Mammary epithelial cell (primary cell): ENCODE measurements at regions of chr21 and their contacts with region 1.

Region 1: GRCh38 chr21:36337099-36337509 is 17.1 kb downstream of the MORC3 start:
- DNase-seq: peak; percentile 85
- H3K4me3 ChIP-seq: peak overlapping the region in 1 of 3 experiments; percentile 34
- H3K27ac ChIP-seq: peak overlapping the region; percentile 99
- H3K4me1 ChIP-seq: peaks cover 13% of the 10 kb centered on the region
- H3K27me3 ChIP-seq: no peaks in the 10 kb centered on the region
- CTCF ChIP-seq: no peak

Region 2: DNA sequence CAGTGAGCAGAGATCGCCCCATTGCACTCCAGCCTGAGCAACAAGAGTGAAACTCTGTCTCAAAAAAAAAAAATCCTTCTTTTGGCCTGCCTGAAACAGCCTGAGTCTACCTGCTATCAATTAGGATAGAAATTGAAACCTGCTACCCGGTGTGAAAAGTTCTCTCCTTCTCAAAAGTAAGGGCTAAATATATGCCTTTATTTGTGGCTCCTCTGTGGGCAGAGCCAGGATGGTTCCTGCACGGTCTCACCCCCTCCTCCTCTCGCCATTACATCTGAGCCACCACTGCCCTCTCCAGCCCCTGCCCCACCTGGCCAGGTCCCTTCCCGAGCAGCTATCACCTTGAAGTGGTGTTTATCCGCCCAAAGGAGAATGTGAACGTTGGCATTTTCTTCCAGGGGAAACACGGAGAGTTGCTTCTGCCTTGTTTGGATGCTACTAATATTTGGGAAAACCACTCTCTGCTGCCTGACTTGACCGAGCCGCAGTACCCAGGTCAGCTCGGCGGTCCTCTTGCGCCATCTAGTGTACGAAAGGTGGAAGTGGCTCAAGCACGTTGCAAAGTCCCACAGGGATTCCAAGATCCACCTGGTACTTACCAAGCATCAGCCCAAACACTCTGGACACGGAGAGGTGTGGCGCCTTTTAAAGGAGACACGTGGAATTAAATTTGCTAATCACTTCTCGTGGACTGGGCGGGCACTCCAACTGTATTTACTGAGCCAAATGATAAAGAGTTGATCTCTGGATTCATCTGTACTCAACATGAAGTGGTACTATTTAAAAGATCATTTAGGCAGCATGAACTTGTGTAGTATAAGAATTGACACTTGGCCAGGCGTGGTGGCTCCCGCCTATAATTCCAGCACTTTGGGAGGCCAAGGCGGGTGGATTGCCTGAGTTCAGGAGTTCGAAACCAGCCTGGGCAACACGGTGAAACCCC is 308.7 kb before region 1 on chr21:
- CTCF ChIA-PET with region 1: no interaction called
- dilution Hi-C with region 1: no loop called
- in situ Hi-C with region 1: no loop called
- intact Hi-C with region 1: no loop called
- DNase-seq: peak; percentile 70
- H3K4me3 ChIP-seq: no peak overlapping the region
- H3K27ac ChIP-seq: no peak overlapping the region
- H3K4me1 ChIP-seq: peaks cover 11% of the 10 kb centered on the region
- H3K27me3 ChIP-seq: no peaks in the 10 kb centered on the region
- CTCF ChIP-seq: peak; percentile 96 to 97

Region 3: DNA sequence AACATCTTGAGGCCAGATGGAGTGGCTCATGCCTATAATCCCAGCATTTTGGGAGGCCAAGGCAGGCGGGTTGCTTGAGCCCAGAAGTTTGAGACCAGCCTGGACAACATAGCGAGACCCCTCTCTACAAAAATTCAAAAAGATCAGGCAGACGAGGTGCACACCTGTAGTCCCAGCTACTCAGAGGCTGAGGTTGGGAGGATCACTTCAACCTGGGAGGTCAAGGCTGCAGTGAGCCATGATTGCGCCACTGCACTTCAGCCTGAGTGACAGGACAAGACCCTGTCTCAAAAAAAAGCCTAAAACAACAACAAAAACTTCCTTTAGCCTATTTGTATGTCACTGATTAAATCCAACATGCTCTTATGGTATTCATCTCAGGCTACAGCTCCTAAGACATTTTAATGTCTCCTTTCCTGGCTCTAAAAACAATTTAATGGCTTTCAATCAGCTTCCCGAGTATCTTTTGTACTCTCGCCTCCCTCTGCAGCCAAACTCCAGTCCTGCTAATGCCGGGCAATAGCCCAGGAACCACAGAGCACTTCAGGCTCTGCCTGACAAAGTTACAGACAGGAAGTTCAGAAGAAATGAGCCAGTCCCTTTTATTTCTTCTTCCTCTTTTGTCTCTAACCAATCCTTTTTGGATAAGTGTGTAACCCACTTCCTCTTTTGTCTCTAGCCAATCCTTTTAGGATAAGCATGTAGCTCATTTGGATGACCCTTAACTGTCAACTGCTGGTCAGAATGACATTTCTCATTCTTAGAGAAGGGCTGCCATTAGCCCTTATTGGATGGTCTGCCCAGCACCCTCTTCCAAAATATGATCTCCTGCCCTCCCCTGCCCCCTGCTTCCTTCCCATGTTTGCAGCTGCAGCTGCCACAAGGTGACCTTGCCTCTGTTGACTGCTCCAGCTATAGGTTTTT is 187.1 kb before region 1 on chr21:
- CTCF ChIA-PET with region 1: no interaction called
- dilution Hi-C with region 1: no loop called
- in situ Hi-C with region 1: loop called in 1 of 2 experiments (anchors 5 kb)
- intact Hi-C with region 1: no loop called
- DNase-seq: no peak
- H3K4me3 ChIP-seq: no peak overlapping the region
- H3K27ac ChIP-seq: no peak overlapping the region
- H3K4me1 ChIP-seq: no peaks in the 10 kb centered on the region
- H3K27me3 ChIP-seq: no peaks in the 10 kb centered on the region
- CTCF ChIP-seq: no peak

Region 4: GRCh38 chr21:36232641-36233040 is 104.5 kb before region 1 on chr21:
- CTCF ChIA-PET with region 1: no interaction called
- dilution Hi-C with region 1: no loop called
- in situ Hi-C with region 1: no loop called
- intact Hi-C with region 1: no loop called
- DNase-seq: no peak
- H3K4me3 ChIP-seq: no peak overlapping the region
- H3K27ac ChIP-seq: no peak overlapping the region
- H3K4me1 ChIP-seq: peaks cover 9% of the 10 kb centered on the region
- H3K27me3 ChIP-seq: no peaks in the 10 kb centered on the region
- CTCF ChIP-seq: no peak

Region 5: DNA sequence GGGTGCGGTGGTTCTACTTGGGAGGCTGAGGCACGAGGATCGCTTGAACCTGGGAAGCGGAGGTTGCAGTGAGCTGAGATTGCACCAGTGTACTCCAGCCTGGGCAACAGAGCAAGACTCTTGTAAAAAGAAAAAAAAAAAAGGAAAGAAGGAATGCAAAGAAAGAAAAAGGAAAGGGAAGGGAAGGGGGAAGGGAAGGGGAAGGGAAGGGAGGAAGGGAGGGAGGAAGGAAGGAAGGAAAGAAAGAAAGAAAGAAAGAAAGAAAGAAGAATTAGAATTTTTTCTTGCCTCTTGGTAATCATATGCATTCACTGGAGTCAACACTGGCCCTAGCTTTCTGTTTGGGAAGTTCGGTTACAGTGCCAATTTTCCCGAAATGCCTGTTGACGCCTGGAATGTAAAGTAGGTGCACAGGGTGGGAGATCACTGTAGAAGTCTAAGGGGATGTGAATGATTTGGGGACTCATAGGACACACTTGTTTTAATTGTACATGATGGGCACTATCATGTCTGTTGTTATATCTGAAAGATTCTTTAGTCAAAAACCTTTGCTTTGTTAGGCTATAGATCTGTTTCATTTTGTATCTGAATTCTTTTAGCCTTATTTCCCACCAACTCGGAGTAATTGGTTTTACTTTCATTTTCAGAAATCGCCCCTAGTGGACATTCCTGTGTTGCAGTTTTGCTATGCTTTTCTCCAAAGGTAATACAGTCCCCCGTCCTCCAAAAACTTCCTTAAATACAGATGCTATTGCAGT is 76.9 kb before region 1 on chr21:
- CTCF ChIA-PET with region 1: interaction called, 26 read pairs
- dilution Hi-C with region 1: no loop called
- in situ Hi-C with region 1: no loop called
- intact Hi-C with region 1: no loop called
- DNase-seq: peak; percentile 51
- H3K4me3 ChIP-seq: peak overlapping the region; percentile 43 to 57 (median 55)
- H3K27ac ChIP-seq: peak overlapping the region; percentile 36
- H3K4me1 ChIP-seq: peaks cover 3% of the 10 kb centered on the region
- H3K27me3 ChIP-seq: no peaks in the 10 kb centered on the region
- CTCF ChIP-seq: peak; percentile 75 to 88

Region 6: GRCh38 chr21:36369064-36369685 is 32.1 kb after region 1 on chr21:
- CTCF ChIA-PET with region 1: no interaction called
- dilution Hi-C with region 1: no loop called
- in situ Hi-C with region 1: no loop called
- intact Hi-C with region 1: no loop called
- DNase-seq: no peak
- H3K4me3 ChIP-seq: no peak overlapping the region
- H3K27ac ChIP-seq: no peak overlapping the region
- H3K4me1 ChIP-seq: no peaks in the 10 kb centered on the region
- H3K27me3 ChIP-seq: no peaks in the 10 kb centered on the region
- CTCF ChIP-seq: no peak